B cell (primary cell): ENCODE measurements at regions of chr12 and their contacts with region 1.

Region 1: GRCh38 chr12:55973598-55974307 is at the start of gene RAB5B:
- DNase-seq: peak; percentile 99
- ATAC-seq: peak; percentile 87
- H3K4me3 ChIP-seq: peak within 1 kb of the TSS; percentile 77 to 99 (median 90)
- H3K4me3 Mint-ChIP-seq: no peak within 1 kb of the TSS
- H3K27ac ChIP-seq: peak within 1 kb of the TSS; percentile 85 to 96
- H3K27ac Mint-ChIP-seq: no peak within 1 kb of the TSS
- H3K4me1 ChIP-seq: peaks cover 17% of the 10 kb centered on the region in 2 donors
- H3K4me1 Mint-ChIP-seq: peaks cover 13% of the 10 kb centered on the region
- H3K27me3 ChIP-seq: no peaks in the 10 kb centered on the region
- H3K27me3 Mint-ChIP-seq: no peaks in the 10 kb centered on the region
- CTCF ChIP-seq: no peak
- total RNA-seq, gene RAB5B: 96.1 and 111 TPM in 2 replicates

Region 2: DNA sequence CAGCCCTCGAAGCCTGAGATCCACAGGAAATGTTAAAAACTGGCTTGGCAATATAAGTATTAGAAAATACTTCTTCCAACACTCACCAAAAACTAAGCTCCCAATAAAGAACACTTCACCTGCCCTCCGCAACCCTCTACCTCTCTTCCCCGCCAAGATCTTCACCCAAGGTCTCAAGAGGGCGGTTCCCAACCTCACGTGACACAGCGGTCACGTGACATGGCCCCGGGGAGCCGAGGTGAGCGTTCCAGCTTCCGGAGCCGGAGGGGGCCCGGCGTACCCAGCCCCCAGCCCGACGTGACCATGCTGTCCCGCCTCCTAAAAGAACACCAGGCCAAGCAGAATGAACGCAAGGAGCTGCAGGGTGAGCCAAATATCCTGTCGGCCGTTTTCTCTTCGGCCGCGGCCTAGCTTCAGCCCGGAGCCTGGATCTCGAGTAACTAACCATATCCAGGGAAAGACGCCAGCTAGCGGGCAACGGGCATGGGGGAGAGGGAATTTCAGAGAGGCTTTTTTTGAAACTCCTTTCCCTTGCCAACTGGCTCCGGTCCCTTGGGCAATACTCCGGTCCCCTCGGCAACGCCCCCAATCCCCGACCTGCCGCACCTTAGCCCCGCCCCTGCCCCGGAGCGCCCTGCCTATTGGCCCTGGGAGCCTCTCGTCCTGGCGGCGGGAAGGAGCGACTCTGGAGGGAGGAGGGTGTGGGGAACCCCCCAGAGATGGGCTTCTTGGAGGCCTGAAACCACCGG is 257.7 kb before region 1 on chr12 and contains the start of gene BLOC1S1:
- CTCF ChIA-PET with region 1: no interaction called
- POLR2A ChIA-PET with region 1: interaction called, 4 read pairs
- intact Hi-C with region 1: loop called (anchors 1 kb)
- DNase-seq: peak; percentile 95
- ATAC-seq: peak; percentile 95
- H3K4me3 ChIP-seq: peak within 1 kb of the TSS; percentile 86 to 98 (median 97)
- H3K4me3 Mint-ChIP-seq: peak within 1 kb of the TSS; percentile 98
- H3K27ac ChIP-seq: peak within 1 kb of the TSS; percentile 81 to 84
- H3K27ac Mint-ChIP-seq: peak within 1 kb of the TSS; percentile 99
- H3K4me1 ChIP-seq: peaks cover 16 to 30% of the 10 kb centered on the region in 2 donors
- H3K4me1 Mint-ChIP-seq: peaks cover 38% of the 10 kb centered on the region
- H3K27me3 ChIP-seq: no peaks in the 10 kb centered on the region
- H3K27me3 Mint-ChIP-seq: no peaks in the 10 kb centered on the region
- CTCF ChIP-seq: no peak
- total RNA-seq, gene BLOC1S1: 67.1 and 71.1 TPM in 2 replicates

Region 3: GRCh38 chr12:55829967-55830600 is 143.7 kb before region 1 on chr12:
- CTCF ChIA-PET with region 1: interaction called, 5 read pairs
- POLR2A ChIA-PET with region 1: no interaction called
- intact Hi-C with region 1: loop called (anchors 1 kb)
- DNase-seq: peak; percentile 65
- ATAC-seq: peak; percentile 4
- H3K4me3 ChIP-seq: peak overlapping the region; percentile 68 to 96 (median 84)
- H3K4me3 Mint-ChIP-seq: peak overlapping the region; percentile 99
- H3K27ac ChIP-seq: peak overlapping the region; percentile 57 to 60
- H3K27ac Mint-ChIP-seq: peak overlapping the region; percentile 97
- H3K4me1 ChIP-seq: peaks cover 36 to 49% of the 10 kb centered on the region in 2 donors
- H3K4me1 Mint-ChIP-seq: peaks cover 48% of the 10 kb centered on the region
- H3K27me3 ChIP-seq: no peaks in the 10 kb centered on the region
- H3K27me3 Mint-ChIP-seq: no peaks in the 10 kb centered on the region
- CTCF ChIP-seq: no peak

Region 4: DNA sequence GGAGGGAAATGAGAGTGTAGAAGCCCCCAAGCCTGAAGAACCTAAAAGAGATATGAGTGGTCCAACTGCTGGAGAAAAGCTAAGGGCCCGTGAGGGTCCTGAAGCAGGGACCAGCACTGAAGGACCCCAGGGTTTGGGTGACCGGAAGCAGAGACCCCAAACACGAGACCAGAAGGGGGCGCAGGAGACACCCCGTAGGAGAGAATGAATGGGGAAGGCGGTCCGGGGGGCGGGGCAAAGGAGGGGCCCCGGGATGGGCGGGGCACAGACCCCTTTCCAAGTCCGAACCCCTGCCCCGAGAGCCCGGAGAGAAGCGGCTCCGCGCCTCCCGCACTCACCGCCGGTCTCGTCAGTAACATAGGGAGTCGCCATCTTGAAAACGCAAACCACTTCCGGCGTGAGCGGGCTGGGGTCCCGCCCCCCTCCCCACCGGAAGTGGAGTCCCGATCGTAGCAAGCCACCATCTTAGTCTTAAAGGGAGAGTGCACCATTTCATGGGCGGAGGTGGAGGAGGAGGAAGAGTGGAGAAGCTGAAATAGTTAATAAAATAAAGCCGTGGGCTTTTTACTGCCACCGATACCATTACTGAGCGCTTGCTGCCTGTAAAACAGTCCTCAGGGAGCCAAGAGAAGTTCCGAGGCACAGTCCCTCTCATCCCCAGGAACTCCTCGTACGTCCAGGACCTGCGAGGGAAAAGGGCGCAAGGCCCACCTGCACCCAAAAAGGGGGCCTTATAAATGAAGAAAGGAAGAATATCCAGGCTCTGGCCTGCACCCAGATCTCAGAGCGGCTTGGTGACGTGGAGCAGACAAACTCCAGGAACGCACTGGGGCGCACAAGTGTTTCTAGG is 46.8 kb before region 1 on chr12:
- CTCF ChIA-PET with region 1: interaction called, 6 read pairs
- POLR2A ChIA-PET with region 1: interaction called, 10 read pairs
- intact Hi-C with region 1: loop called (anchors 1 kb)
- DNase-seq: peak; percentile 94
- ATAC-seq: peak; percentile 50
- H3K4me3 ChIP-seq: peak overlapping the region; percentile 88 to 100 (median 98)
- H3K4me3 Mint-ChIP-seq: peak overlapping the region; percentile 94
- H3K27ac ChIP-seq: peak overlapping the region; percentile 67 to 92
- H3K27ac Mint-ChIP-seq: peak overlapping the region; percentile 97
- H3K4me1 ChIP-seq: peaks cover 33 to 45% of the 10 kb centered on the region in 2 donors
- H3K4me1 Mint-ChIP-seq: peaks cover 54% of the 10 kb centered on the region
- H3K27me3 ChIP-seq: no peaks in the 10 kb centered on the region
- H3K27me3 Mint-ChIP-seq: no peaks in the 10 kb centered on the region
- CTCF ChIP-seq: peak; percentile 87

Region 5: GRCh38 chr12:56007564-56008559 is 34.1 kb after region 1 on chr12:
- CTCF ChIA-PET with region 1: no interaction called
- POLR2A ChIA-PET with region 1: interaction called, 10 read pairs
- intact Hi-C with region 1: loop called (anchors 2 kb)
- DNase-seq: peak; percentile 69
- ATAC-seq: peak; percentile 91
- H3K4me3 ChIP-seq: peak overlapping the region; percentile 31 to 81 (median 62)
- H3K4me3 Mint-ChIP-seq: peak overlapping the region; percentile 91
- H3K27ac ChIP-seq: peak overlapping the region; percentile 4 to 64
- H3K27ac Mint-ChIP-seq: peak overlapping the region; percentile 80
- H3K4me1 ChIP-seq: peaks cover 5 to 11% of the 10 kb centered on the region in 2 donors
- H3K4me1 Mint-ChIP-seq: peaks cover 14% of the 10 kb centered on the region
- H3K27me3 ChIP-seq: no peaks in the 10 kb centered on the region
- H3K27me3 Mint-ChIP-seq: no peaks in the 10 kb centered on the region
- CTCF ChIP-seq: no peak

Region 6: GRCh38 chr12:56104109-56104814 is 130.5 kb after region 1 on chr12 and contains the start of gene PA2G4:
- CTCF ChIA-PET with region 1: no interaction called
- POLR2A ChIA-PET with region 1: interaction called, 5 read pairs
- intact Hi-C with region 1: loop called (anchors 5 kb)
- DNase-seq: peak; percentile 95
- ATAC-seq: peak; percentile 89
- H3K4me3 ChIP-seq: peak within 1 kb of the TSS; percentile 56 to 93 (median 86)
- H3K4me3 Mint-ChIP-seq: peak within 1 kb of the TSS; percentile 100
- H3K27ac ChIP-seq: peak within 1 kb of the TSS; percentile 66 to 67
- H3K27ac Mint-ChIP-seq: peak within 1 kb of the TSS; percentile 92
- H3K4me1 ChIP-seq: peaks cover 18 to 23% of the 10 kb centered on the region in 2 donors
- H3K4me1 Mint-ChIP-seq: peaks cover 38% of the 10 kb centered on the region
- H3K27me3 ChIP-seq: no peaks in the 10 kb centered on the region
- H3K27me3 Mint-ChIP-seq: no peaks in the 10 kb centered on the region
- CTCF ChIP-seq: no peak
- total RNA-seq, gene PA2G4: 77.3 and 84.6 TPM in 2 replicates

Region 7: GRCh38 chr12:56630160-56630632 is 656.4 kb after region 1 on chr12 and contains the start of gene BAZ2A:
- CTCF ChIA-PET with region 1: no interaction called
- POLR2A ChIA-PET with region 1: interaction called, 10 read pairs
- intact Hi-C with region 1: loop called (anchors 5 kb)
- DNase-seq: peak; percentile 84
- ATAC-seq: peak; percentile 65
- H3K4me3 ChIP-seq: peak within 1 kb of the TSS; percentile 98 to 100 (median 99)
- H3K4me3 Mint-ChIP-seq: peak within 1 kb of the TSS; percentile 89
- H3K27ac ChIP-seq: peak within 1 kb of the TSS; percentile 97 to 98
- H3K27ac Mint-ChIP-seq: peak within 1 kb of the TSS; percentile 92
- H3K4me1 ChIP-seq: peaks cover 63 to 73% of the 10 kb centered on the region in 2 donors
- H3K4me1 Mint-ChIP-seq: peaks cover 78% of the 10 kb centered on the region
- H3K27me3 ChIP-seq: no peaks in the 10 kb centered on the region
- H3K27me3 Mint-ChIP-seq: no peaks in the 10 kb centered on the region
- CTCF ChIP-seq: no peak
- total RNA-seq, gene BAZ2A: 280 and 284 TPM in 2 replicates

Region 8: DNA sequence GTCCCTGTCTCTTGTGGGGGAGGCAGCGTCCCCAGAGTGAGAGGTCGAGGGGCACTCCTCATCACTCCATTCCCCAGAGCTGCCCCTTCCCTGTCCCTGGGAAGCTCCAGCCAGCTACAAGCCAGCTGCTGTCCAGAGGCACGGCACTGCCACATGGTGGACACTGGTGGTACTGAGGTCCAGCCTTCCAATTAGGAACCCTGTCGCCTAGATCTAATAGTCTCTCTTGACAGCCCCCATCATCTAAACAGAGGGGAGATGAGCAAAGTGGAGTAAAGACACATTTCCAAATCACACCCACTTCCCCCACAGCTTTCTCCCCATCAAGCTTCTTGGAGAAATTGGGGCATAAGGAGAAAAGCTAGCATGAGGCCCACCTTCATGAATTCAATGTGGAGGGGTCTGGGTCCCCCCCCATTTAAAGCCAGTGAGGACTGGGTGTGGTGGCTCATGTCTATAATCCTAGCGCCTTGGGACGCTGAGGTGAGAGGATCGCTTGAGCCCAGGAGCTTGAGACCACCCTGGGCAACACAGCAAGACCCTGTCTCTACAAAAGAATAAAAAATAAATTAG is 1479.3 kb after region 1 on chr12:
- CTCF ChIA-PET with region 1: no interaction called
- POLR2A ChIA-PET with region 1: no interaction called
- intact Hi-C with region 1: no loop called
- DNase-seq: peak; percentile 61
- ATAC-seq: peak; percentile 55
- H3K4me3 ChIP-seq: no peak overlapping the region
- H3K4me3 Mint-ChIP-seq: no peak overlapping the region
- H3K27ac ChIP-seq: no peak overlapping the region
- H3K27ac Mint-ChIP-seq: peak overlapping the region; percentile 11
- H3K4me1 ChIP-seq: peaks cover 7 to 10% of the 10 kb centered on the region in 2 donors
- H3K4me1 Mint-ChIP-seq: peaks cover 15% of the 10 kb centered on the region
- H3K27me3 ChIP-seq: no peaks in the 10 kb centered on the region
- H3K27me3 Mint-ChIP-seq: peaks cover 4% of the 10 kb centered on the region
- CTCF ChIP-seq: peak; percentile 72